ENCODE measurements at regions of chr9 and their contacts with region 1.

Region 1: DNA sequence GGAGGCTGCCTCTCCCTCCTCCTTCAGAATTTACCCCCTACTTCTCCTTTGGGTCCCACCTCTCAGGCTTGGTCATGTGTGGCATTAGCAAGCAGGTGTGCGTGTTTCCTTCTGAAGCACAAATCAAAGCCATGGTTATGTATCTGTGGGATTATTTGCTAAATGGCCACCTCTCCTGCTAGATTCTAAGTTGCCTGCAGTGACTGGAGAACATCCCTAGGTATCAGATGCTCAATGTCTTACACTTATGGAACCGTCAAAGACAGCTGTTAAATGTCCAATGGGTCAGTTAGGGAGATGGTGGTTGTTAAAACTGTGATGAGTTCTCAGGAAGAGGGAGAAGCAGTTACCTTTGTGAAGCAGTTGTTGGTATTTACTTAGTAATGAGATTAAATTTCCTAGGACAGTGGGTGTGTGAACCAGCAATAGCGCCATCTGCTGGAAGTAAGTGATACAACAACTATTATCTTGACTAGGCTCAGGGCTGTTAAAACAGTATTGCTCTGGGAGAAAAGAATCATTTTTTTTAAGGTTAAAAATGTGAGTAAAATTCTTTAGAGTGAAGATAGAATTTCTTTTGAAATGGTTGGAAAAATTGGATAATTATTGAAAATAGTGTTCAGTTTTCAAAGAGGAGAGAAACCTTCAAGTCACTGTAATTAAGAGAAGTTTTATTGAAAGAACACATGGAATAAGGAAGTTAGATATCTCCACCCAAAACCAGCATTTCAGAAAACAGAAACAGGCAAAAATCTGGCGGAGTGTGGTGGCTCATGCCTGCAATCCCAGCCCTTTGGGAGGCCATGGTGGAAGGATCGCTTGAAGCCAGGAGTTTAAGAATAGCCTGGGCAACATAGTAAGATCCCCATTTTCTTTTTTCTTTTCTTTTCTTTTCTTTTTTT is 71.3 kb downstream of the TMC1 start:
- DNase-seq: no peak
- H3K4me3 Mint-ChIP-seq: no peak overlapping the region
- H3K27ac Mint-ChIP-seq: no peak overlapping the region
- H3K4me1 Mint-ChIP-seq: peaks cover 50% of the 10 kb centered on the region
- H3K27me3 Mint-ChIP-seq: peaks cover 8% of the 10 kb centered on the region

Region 2: DNA sequence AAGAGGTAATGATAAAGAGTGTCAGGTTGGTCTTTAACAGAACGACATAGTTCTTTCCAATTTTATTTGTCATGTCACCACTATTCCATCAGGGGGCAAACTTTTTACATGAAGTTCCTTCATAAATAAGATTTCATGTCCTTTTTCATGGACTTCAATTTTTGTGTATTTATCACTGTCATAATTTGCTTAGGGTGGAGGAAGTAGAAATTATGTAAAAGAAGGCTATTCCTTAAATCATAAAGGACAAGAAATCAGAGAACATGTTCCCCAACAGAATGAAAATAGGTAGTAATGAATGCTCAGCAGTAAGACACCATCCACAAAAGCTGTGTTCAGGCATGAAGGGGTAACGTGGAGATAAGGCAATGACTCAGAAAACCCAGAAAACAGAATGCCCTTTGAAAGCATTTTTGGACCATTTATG is 300.5 kb before region 1 on chr9:
- intact Hi-C with region 1: loop called (anchors 1 kb)
- DNase-seq: no peak
- H3K4me3 Mint-ChIP-seq: no peak overlapping the region
- H3K27ac Mint-ChIP-seq: no peak overlapping the region
- H3K4me1 Mint-ChIP-seq: peaks cover 3% of the 10 kb centered on the region
- H3K27me3 Mint-ChIP-seq: peaks cover 18% of the 10 kb centered on the region

Region 3: GRCh38 chr9:72473474-72474261 is 119.1 kb before region 1 on chr9:
- intact Hi-C with region 1: loop called (anchors 10 kb)
- DNase-seq: no peak
- H3K4me3 Mint-ChIP-seq: no peak overlapping the region
- H3K27ac Mint-ChIP-seq: peak overlapping the region; percentile 77
- H3K4me1 Mint-ChIP-seq: peaks cover 33% of the 10 kb centered on the region
- H3K27me3 Mint-ChIP-seq: no peaks in the 10 kb centered on the region

Region 4: GRCh38 chr9:72541676-72542289 is 51.0 kb before region 1 on chr9:
- intact Hi-C with region 1: loop called (anchors 1 kb)
- DNase-seq: no peak
- H3K4me3 Mint-ChIP-seq: no peak overlapping the region
- H3K27ac Mint-ChIP-seq: peak overlapping the region; percentile 73
- H3K4me1 Mint-ChIP-seq: peaks cover 26% of the 10 kb centered on the region
- H3K27me3 Mint-ChIP-seq: no peaks in the 10 kb centered on the region

Region 5: GRCh38 chr9:72612445-72612844 is 19.7 kb after region 1 on chr9:
- intact Hi-C with region 1: no loop called
- DNase-seq: no peak
- H3K4me3 Mint-ChIP-seq: no peak overlapping the region
- H3K27ac Mint-ChIP-seq: no peak overlapping the region
- H3K4me1 Mint-ChIP-seq: no peaks in the 10 kb centered on the region
- H3K27me3 Mint-ChIP-seq: peaks cover 4% of the 10 kb centered on the region

Region 6: GRCh38 chr9:72635197-72635596 is 42.4 kb after region 1 on chr9:
- intact Hi-C with region 1: loop called (anchors 2 kb)
- DNase-seq: no peak
- H3K4me3 Mint-ChIP-seq: no peak overlapping the region
- H3K27ac Mint-ChIP-seq: no peak overlapping the region
- H3K4me1 Mint-ChIP-seq: peaks cover 15% of the 10 kb centered on the region
- H3K27me3 Mint-ChIP-seq: peaks cover 5% of the 10 kb centered on the region